ENCODE measurements at regions of chr9 and their contacts with region 1.

Region 1: DNA sequence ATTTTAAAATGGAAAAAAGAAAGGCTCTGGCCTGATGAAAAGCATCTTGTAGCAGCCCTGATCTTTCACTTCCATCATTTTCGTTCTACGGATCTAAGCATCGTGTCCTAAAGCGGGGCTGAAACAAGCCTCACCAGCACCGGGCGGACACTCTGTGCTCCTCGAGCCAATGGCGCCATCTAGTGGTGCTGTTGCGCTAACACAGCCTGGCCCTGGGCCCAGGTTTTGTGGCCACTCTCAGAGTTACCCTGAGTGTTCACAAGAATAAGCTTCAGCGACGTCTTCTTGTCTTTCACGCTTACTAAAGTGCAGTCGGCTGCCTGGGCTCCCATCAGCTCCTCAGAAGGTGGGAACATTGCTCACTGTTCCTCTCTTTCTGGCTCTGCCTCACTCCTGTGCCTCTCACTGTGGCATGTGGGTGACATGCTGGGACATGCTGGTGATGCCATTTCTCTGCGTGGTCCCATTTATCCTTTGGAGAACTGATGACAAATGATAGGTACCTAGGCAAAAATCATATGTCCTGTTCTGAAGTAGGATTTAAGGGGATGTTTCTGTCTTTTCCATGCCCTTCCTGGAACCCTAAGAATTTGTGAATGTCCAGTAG is 32.7 kb downstream of the DMRT3 start:
- DNase-seq: peak; percentile 81
- H3K4me3 ChIP-seq: no peak overlapping the region
- H3K27ac ChIP-seq: no peak overlapping the region
- H3K4me1 ChIP-seq: peaks cover 14% of the 10 kb centered on the region
- CTCF ChIP-seq: peak; percentile 98

Region 2: DNA sequence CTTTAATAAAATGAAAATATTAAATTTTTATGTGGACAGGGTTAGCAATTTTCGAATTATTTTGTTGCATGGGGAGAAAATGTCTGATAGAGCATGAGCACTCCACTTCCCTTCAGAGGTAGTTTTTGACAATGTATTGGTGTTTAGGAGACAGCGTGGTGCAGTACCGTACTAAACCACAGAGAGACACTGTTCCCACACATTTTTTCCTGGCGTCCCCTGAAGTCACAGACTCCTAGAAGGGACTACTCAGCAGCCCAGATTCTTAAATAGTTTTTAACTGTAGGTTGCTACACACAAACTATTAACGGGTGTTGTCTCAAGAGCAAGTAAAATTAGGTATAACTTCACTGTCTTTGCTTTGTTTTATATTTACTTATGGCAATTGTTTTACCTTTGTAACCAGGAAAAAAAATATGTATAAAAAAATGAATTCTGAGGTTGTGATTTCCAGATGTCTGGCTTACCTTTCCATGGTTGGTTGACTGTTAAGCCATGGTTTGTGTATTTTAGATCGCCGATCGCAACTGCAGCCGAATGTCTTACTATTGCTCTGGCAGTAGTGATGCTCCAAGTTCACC is 623.3 kb before region 1 on chr9:
- CTCF ChIA-PET with region 1: no interaction called
- POLR2A ChIA-PET with region 1: no interaction called
- intact Hi-C with region 1: loop called (anchors 10 kb)
- DNase-seq: peak; percentile 67
- H3K4me3 ChIP-seq: no peak overlapping the region
- H3K27ac ChIP-seq: no peak overlapping the region
- H3K4me1 ChIP-seq: no peaks in the 10 kb centered on the region
- CTCF ChIP-seq: peak; percentile 89

Region 3: DNA sequence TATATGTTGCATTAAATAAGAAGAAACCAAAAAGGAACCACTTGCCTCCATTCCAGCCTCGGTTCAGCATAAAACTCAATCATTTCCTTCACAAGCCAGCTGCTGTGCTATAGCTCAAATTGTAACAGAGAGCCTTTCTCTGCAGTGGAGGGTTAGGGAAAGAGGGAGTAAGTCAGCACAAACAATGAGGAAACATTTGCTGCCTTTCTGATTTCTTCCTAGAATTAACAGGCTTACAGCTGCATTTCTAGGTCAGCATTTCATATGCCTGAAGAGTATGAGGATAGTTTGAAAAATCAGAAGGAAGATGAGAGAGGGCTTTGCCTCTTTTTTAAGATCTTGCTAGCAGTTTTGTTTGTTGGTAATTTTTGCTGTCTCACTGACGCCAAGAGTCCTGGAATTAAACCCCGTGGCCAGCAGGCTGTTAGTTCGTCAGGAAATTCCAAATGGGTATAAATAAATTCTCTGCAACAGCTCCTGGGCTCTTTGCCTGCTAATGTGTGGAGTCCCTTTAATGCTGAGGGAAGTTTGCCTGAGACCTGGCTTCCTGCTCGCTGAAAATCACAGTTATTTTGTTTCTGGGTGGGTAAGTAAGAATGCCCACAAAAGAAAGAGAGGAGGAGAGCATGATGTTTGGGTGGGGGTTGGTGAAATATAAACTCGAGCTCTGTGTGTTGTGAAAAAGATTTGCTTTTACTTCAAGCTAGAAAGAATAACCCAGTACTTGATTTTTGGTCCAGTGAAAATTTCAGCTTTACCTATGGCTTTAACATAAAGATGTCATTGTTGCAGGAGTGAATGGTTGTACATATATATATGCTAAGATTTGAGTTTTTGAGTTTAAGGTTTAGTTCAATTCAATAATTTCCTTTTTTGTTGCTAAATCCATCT is 315.8 kb before region 1 on chr9:
- CTCF ChIA-PET with region 1: no interaction called
- POLR2A ChIA-PET with region 1: no interaction called
- intact Hi-C with region 1: no loop called
- DNase-seq: peak; percentile 21
- H3K4me3 ChIP-seq: no peak overlapping the region
- H3K27ac ChIP-seq: no peak overlapping the region
- H3K4me1 ChIP-seq: peaks cover 18% of the 10 kb centered on the region
- CTCF ChIP-seq: no peak

Region 4: GRCh38 chr9:806285-807156 is 202.7 kb before region 1 on chr9:
- CTCF ChIA-PET with region 1: interaction called, 4 read pairs
- POLR2A ChIA-PET with region 1: interaction called, 3 read pairs
- intact Hi-C with region 1: loop called (anchors 5 kb)
- DNase-seq: peak; percentile 54
- H3K4me3 ChIP-seq: no peak overlapping the region
- H3K27ac ChIP-seq: no peak overlapping the region
- H3K4me1 ChIP-seq: no peaks in the 10 kb centered on the region
- CTCF ChIP-seq: peak; percentile 92

Region 5: GRCh38 chr9:893843-894420 is 115.3 kb before region 1 on chr9:
- CTCF ChIA-PET with region 1: interaction called, 5 read pairs
- POLR2A ChIA-PET with region 1: interaction called, 5 read pairs
- intact Hi-C with region 1: loop called (anchors 1 kb)
- DNase-seq: peak; percentile 81
- H3K4me3 ChIP-seq: peak overlapping the region; percentile 32
- H3K27ac ChIP-seq: no peak overlapping the region
- H3K4me1 ChIP-seq: peaks cover 10% of the 10 kb centered on the region
- CTCF ChIP-seq: peak; percentile 97

Region 6: GRCh38 chr9:922171-922570 is 87.0 kb before region 1 on chr9:
- CTCF ChIA-PET with region 1: no interaction called
- POLR2A ChIA-PET with region 1: no interaction called
- intact Hi-C with region 1: no loop called
- DNase-seq: no peak
- H3K4me3 ChIP-seq: no peak overlapping the region
- H3K27ac ChIP-seq: no peak overlapping the region
- H3K4me1 ChIP-seq: no peaks in the 10 kb centered on the region
- CTCF ChIP-seq: no peak

Region 7: DNA sequence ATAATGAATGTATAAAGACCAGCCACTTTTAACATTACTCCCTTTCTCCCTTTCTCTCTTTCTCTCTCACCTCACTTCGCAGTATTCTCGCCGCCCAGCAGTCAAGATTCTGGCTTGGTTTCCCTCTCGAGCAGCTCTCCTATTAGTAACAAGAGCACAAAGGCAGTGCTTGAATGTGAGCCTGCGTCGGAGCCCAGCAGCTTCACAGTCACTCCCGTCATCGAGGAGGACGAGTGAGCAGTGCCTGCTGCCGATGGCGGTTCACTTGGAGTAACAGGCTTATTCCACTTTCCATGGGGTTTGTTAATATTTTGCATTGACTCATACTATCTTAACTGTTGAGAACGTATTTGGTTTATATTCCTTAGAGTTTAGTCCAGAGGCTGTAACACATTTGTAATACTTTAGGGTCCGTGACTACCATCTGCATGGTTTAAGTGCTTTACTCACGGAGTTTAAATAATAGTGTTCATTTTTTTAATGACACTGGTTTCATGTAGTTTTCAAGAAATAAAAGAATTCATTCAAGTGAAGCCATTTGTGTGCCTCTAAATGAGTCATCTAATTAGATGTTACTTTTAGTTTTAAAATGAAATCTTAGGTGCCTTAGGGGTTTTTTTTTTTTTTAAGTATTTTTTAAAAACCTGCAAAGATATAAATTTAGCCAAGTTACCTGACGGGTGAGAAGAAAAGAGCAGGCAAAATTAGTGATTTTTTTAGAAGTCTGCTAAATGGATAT is 41.1 kb before region 1 on chr9:
- CTCF ChIA-PET with region 1: no interaction called
- POLR2A ChIA-PET with region 1: no interaction called
- intact Hi-C with region 1: loop called (anchors 5 kb)
- DNase-seq: no peak
- H3K4me3 ChIP-seq: no peak overlapping the region
- H3K27ac ChIP-seq: no peak overlapping the region
- H3K4me1 ChIP-seq: no peaks in the 10 kb centered on the region
- CTCF ChIP-seq: no peak

Region 8: DNA sequence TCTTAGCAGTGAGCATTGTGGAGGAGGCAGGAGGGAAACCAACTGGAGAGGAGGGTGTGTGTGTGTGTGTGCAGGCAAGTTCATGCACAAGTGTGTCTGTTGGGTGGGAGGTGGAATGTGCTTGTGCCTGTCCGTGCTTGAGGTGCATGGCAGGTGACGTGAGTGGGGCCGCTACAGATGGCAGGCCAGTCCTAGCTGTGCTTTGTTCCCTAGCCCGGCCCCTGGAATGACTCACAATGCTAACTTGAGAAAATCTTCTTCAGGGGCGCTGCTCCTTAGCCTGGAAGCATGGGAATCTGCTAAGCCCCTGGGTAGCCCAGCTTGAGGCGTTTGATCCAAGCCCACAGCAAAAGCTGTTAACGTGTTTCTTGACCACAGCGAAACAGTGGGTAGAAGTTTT is 15.9 kb after region 1 on chr9:
- CTCF ChIA-PET with region 1: no interaction called
- POLR2A ChIA-PET with region 1: no interaction called
- intact Hi-C with region 1: no loop called
- DNase-seq: no peak
- H3K4me3 ChIP-seq: no peak overlapping the region
- H3K27ac ChIP-seq: no peak overlapping the region
- H3K4me1 ChIP-seq: no peaks in the 10 kb centered on the region
- CTCF ChIP-seq: no peak

Measured in OCI-LY7 (cell line).